ENCODE measurements at regions of chr9 and their contacts with region 1.

Region 1: GRCh38 chr9:128702445-128702948 is at the start of gene PKN3:
- DNase-seq: peak; percentile 95
- CTCF ChIP-seq: peak; percentile 88

Region 2: DNA sequence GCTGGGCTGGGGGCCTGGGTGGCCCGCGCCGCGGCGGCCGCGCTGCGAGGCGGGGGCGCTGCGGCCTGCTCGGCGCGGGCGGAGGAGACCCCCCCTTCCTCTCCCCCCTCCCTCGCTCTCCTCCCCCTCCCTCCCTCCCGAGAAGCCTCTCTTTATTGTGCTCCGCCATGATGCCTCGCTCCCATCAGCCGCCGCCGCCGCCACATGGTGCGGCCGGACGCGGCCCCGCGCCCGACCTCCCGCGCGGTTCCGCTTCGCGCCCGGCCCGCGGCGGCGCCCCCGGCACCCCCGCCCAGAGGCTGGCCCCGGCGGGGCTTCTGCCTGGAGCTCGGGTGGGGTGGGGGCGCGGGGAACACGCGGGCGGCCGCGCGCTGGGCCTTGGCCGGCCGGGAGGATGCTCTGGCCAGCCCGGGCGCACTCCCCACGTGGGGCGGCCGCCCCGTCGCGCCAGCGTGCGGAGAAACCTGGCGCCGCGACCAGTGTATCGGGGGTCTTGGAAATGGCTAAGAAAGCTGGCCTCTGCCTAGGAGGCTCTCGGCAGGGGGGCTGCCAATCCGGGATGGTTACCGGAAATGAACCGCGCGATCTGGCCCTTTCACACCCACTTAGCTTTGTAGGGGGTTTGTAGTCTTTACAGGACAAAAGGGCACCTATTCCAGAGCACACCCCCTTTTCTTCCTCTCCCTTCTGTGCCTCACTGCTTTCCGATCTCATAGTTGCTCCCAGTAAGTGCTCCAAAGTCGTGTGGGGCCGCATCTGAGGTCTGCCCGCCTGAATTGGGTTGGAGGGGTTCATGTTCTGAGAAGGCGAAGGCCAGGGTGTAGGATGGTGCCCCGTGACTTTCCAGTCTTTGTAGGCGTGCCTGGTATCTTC is 12.4 kb before region 1 on chr9:
- CTCF ChIA-PET with region 1: interaction called, 33 read pairs
- POLR2A ChIA-PET with region 1: interaction called, 3 read pairs
- DNase-seq: peak; percentile 77
- CTCF ChIP-seq: no peak

Region 3: DNA sequence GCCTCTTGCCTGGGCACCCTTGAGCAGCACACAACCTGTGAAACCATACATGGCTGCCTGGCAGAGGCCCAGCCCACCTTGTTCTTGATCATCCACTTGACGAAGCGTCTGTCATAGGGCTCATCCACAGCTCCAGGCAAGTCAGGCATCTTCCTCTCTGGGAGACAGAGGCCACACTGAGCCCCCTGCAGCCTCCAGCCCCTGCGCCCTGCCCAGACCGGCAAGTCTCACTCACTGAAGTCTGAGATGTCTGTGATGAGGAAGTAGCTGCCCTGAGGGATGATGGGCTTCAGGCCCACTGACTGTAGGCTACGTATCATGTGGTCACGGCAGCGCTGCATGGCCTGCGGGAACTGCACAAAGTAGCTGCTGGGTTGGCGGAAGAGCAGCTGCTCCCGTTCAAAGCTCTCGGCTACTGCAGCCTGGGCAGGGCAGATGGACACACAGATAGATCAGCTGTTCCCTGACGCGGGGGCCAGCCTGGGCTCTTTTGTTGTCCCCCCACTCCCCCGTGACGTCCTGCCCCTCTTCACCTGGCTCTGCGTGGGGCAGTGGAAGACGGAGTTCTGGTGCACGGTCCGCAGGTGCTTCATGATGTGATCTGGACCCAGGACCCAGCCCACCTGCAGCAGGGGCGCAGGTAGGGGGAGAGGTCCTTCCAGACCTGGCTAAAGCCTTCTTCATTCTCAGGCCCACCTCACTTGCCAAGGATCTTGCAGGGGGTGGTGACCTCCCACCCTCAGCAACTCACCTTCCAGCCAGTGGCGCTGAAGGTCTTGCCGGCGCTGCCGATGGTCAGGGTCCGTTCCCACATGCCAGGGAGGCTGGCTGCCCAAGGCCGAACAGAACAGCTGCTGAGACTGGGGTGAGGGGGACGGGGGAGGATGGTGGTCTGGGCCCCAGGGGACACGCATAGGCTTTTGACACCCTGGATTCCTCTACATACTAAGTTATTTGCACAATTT is 133.0 kb after region 1 on chr9:
- CTCF ChIA-PET with region 1: no interaction called
- POLR2A ChIA-PET with region 1: no interaction called
- DNase-seq: no peak
- CTCF ChIP-seq: no peak

Measured in GM10248 (cell line).